Right ventricle myocardium inferior (tissue), 1 donor: ENCODE measurements at regions of chr15 and their contacts with region 1.

Region 1: GRCh38 chr15:74635228-74635627 is 19.6 kb downstream of the CLK3 start:
- DNase-seq: no peak
- ATAC-seq: peak; percentile 64

Region 2: GRCh38 chr15:74950078-74951000 is 315.1 kb after region 1 on chr15:
- intact Hi-C with region 1: loop called (anchors 5 kb)
- DNase-seq: no peak
- ATAC-seq: peak; percentile 65